ENCODE measurements at regions of chr1 and their contacts with region 1.

Region 1: DNA sequence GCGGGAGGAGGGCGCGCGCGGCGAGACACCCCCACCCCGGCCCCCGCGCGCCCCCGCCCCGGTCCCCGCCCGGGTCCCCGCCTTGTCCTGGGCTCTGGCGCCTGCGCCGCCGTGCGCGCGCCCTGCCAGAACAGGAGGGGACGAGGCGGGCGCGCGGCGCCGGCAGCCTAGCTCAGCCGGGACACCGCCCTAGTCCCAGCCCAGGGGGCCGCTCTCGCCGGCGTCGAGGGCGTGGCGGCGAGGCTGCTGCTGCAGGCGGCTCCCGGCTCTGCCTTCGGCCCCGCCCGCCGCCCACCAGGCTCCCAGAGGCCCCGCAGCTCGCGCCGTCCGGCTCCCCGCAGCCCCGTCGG is at the start of gene RCAN3:
- DNase-seq: peak; percentile 89 to 93 (median 90)
- H3K4me3 ChIP-seq: peak within 1 kb of the TSS; percentile 83 to 84
- H3K4me3 Mint-ChIP-seq: peak within 1 kb of the TSS; percentile 96 to 100 (median 99)
- H3K27ac ChIP-seq: peak within 1 kb of the TSS; percentile 93
- H3K27ac Mint-ChIP-seq: peak within 1 kb of the TSS; percentile 92 to 99 (median 98)
- H3K4me1 ChIP-seq: peaks cover 67% of the 10 kb centered on the region
- H3K4me1 Mint-ChIP-seq: peaks cover 43 to 83% (median 57%) of the 10 kb centered on the region in 4 donors
- H3K27me3 ChIP-seq: no peaks in the 10 kb centered on the region
- H3K27me3 Mint-ChIP-seq: no peaks in the 10 kb centered on the region
- total RNA-seq, gene RCAN3: 171 to 178 TPM

Region 2: GRCh38 chr1:24463776-24464735 is 38.6 kb before region 1 on chr1:
- CTCF ChIA-PET with region 1: interaction called, 3 read pairs
- POLR2A ChIA-PET with region 1: interaction called, 6 read pairs
- intact Hi-C with region 1: loop called (anchors 5 kb)
- DNase-seq: no peak
- H3K4me3 ChIP-seq: no peak overlapping the region
- H3K4me3 Mint-ChIP-seq: no peak overlapping the region
- H3K27ac ChIP-seq: no peak overlapping the region
- H3K27ac Mint-ChIP-seq: peak overlapping the region in 6 of 7 donors; percentile 28 to 93 (median 67)
- H3K4me1 ChIP-seq: peaks cover 4% of the 10 kb centered on the region
- H3K4me1 Mint-ChIP-seq: peaks cover 12 to 26% (median 18%) of the 10 kb centered on the region in 4 donors
- H3K27me3 ChIP-seq: no peaks in the 10 kb centered on the region
- H3K27me3 Mint-ChIP-seq: no peaks in the 10 kb centered on the region

Region 3: DNA sequence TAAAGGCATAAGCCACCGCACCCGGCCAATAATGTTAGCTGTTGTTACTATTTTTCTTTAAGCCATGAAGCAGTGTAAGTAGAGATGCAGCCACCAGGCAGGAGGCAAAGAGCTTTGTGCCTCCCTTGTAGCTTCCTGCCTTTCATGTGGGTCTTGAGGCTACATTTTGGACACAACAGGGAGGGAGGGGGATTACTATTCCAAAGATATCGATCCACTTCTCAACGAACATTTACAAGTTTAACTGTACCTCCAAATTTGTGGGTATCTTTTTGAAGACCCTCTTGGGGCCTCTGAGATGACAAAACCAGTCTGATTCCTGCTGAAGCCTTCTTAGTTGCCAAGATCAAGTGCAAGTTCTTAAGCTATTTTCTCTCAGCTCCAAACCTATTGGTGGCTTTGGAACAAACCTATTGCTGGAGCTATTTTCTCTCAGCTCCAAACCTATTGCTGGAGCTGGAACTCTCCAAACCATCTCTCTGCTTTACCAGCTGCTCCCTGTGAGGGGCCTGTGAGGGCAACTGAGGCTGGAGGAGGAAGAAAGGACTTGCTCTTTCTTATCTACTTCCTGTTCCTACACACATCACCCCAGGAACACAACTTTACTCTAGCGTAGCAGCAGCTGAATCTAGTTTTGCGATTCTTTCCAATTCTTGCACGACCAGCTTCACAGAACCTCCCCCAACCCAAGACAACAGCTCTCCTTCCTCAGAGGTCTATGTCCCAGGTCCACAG is 16.2 kb before region 1 on chr1:
- CTCF ChIA-PET with region 1: interaction called, 38 read pairs
- POLR2A ChIA-PET with region 1: interaction called, 459 read pairs
- intact Hi-C with region 1: loop called (anchors 1 kb)
- DNase-seq: peak; percentile 72 to 79 (median 75)
- H3K4me3 ChIP-seq: peak overlapping the region in 1 of 2 donors; percentile 21
- H3K4me3 Mint-ChIP-seq: peak overlapping the region; percentile 66 to 88 (median 82)
- H3K27ac ChIP-seq: peak overlapping the region; percentile 58
- H3K27ac Mint-ChIP-seq: peak overlapping the region; percentile 92 to 98 (median 93)
- H3K4me1 ChIP-seq: peaks cover 82% of the 10 kb centered on the region
- H3K4me1 Mint-ChIP-seq: peaks cover 50 to 82% (median 63%) of the 10 kb centered on the region in 4 donors
- H3K27me3 ChIP-seq: no peaks in the 10 kb centered on the region
- H3K27me3 Mint-ChIP-seq: no peaks in the 10 kb centered on the region

Region 4: GRCh38 chr1:24513706-24514105 is 11.0 kb after region 1 on chr1:
- CTCF ChIA-PET with region 1: interaction called, 4 read pairs
- POLR2A ChIA-PET with region 1: interaction called, 28 read pairs
- intact Hi-C with region 1: no loop called
- DNase-seq: no peak
- H3K4me3 ChIP-seq: no peak overlapping the region
- H3K4me3 Mint-ChIP-seq: peak overlapping the region; percentile 7 to 65 (median 14)
- H3K27ac ChIP-seq: no peak overlapping the region
- H3K27ac Mint-ChIP-seq: peak overlapping the region; percentile 24 to 87 (median 44)
- H3K4me1 ChIP-seq: peaks cover 80% of the 10 kb centered on the region
- H3K4me1 Mint-ChIP-seq: peaks cover 56 to 88% (median 72%) of the 10 kb centered on the region in 4 donors
- H3K27me3 ChIP-seq: no peaks in the 10 kb centered on the region
- H3K27me3 Mint-ChIP-seq: no peaks in the 10 kb centered on the region

Region 5: DNA sequence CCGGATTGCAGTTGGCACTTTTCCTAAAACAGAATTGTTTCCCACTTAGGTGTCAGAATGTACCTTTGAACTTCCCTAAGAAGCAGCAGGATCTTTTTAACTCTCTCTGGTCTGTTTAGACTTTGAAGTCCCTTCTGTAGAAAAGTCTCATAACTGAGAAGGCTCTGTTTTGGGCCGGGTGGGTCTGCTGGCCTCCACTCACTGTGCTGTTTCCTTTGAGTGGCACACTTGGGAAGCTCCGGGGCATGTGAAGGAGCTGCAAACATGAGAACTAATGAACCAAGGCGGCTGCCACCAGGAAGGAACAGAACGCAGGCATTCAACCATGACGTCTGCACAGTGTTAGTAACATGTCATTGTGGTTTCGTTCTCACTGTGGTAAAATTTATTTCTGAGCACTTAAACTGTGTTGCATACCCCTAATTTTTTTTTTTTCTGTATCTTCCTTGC is 33.7 kb after region 1 on chr1:
- CTCF ChIA-PET with region 1: interaction called, 9 read pairs
- POLR2A ChIA-PET with region 1: interaction called, 74 read pairs
- intact Hi-C with region 1: loop called (anchors 1 kb)
- DNase-seq: peak; percentile 83 to 93 (median 86)
- H3K4me3 ChIP-seq: peak overlapping the region in 1 of 2 donors; percentile 32
- H3K4me3 Mint-ChIP-seq: peak overlapping the region; percentile 76 to 92 (median 88)
- H3K27ac ChIP-seq: peak overlapping the region; percentile 88
- H3K27ac Mint-ChIP-seq: peak overlapping the region; percentile 98 to 100 (median 100)
- H3K4me1 ChIP-seq: peaks cover 83% of the 10 kb centered on the region
- H3K4me1 Mint-ChIP-seq: peaks cover 57 to 82% (median 68%) of the 10 kb centered on the region in 4 donors
- H3K27me3 ChIP-seq: no peaks in the 10 kb centered on the region
- H3K27me3 Mint-ChIP-seq: no peaks in the 10 kb centered on the region

Region 6: DNA sequence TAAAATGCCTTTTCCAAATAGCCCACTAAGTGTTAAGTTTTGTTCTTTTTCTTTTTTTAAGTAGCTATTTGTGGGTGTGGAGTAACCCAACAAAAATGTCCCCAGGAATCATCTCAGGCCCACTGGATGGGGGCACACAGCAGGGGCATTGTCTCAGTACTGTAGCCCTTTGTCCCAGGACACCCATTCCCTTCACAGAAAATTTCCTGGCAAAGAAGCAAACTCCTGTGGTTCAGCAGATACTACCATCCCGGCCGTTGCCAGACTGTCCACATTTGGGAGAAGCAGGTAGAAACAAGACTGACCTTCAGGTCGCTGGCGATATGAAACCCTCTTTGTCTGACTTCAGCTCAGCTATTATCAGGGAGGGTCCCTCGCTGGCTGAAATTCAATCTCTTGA is 116.7 kb after region 1 on chr1:
- CTCF ChIA-PET with region 1: no interaction called
- POLR2A ChIA-PET with region 1: no interaction called
- intact Hi-C with region 1: no loop called
- DNase-seq: no peak
- H3K4me3 ChIP-seq: no peak overlapping the region
- H3K4me3 Mint-ChIP-seq: no peak overlapping the region
- H3K27ac ChIP-seq: no peak overlapping the region
- H3K27ac Mint-ChIP-seq: no peak overlapping the region
- H3K4me1 ChIP-seq: no peaks in the 10 kb centered on the region
- H3K4me1 Mint-ChIP-seq: no peaks in the 10 kb centered on the region
- H3K27me3 ChIP-seq: no peaks in the 10 kb centered on the region
- H3K27me3 Mint-ChIP-seq: peaks cover 8 to 20% of the 10 kb centered on the region in 2 donors

Region 7: GRCh38 chr1:24642481-24643361 is 140.0 kb after region 1 on chr1 and contains the start of gene SRRM1:
- CTCF ChIA-PET with region 1: no interaction called
- POLR2A ChIA-PET with region 1: interaction called, 10 read pairs
- intact Hi-C with region 1: loop called (anchors 10 kb)
- DNase-seq: peak; percentile 98 to 100 (median 100)
- H3K4me3 ChIP-seq: peak within 1 kb of the TSS; percentile 47 to 98
- H3K4me3 Mint-ChIP-seq: peak within 1 kb of the TSS; percentile 94 to 98 (median 96)
- H3K27ac ChIP-seq: peak within 1 kb of the TSS; percentile 99
- H3K27ac Mint-ChIP-seq: peak within 1 kb of the TSS; percentile 97 to 100 (median 100)
- H3K4me1 ChIP-seq: peaks cover 32% of the 10 kb centered on the region
- H3K4me1 Mint-ChIP-seq: peaks cover 15 to 61% (median 42%) of the 10 kb centered on the region in 4 donors
- H3K27me3 ChIP-seq: no peaks in the 10 kb centered on the region
- H3K27me3 Mint-ChIP-seq: no peaks in the 10 kb centered on the region
- total RNA-seq, gene SRRM1: 209 to 230 TPM